K562 (cell line): ENCODE measurements at regions of chr1 and their contacts with region 1.

Region 1: GRCh38 chr1:54663725-54664124 is 22.1 kb downstream of the MROH7 start:
- DNase-seq: peak in 1 of 4 experiments; percentile 23
- ATAC-seq: peak; percentile 53
- H3K4me3 ChIP-seq: no peak overlapping the region
- H3K27ac ChIP-seq: no peak overlapping the region
- H3K4me1 ChIP-seq: no peaks in the 10 kb centered on the region
- H3K27me3 ChIP-seq: peaks cover 0 to 5% of the 10 kb centered on the region in 2 experiments; a peak in 3 of 5 replicates
- CTCF ChIP-seq: peak; percentile 28 to 70 (median 44); a peak in 3 of 6 replicates
- EP300 ChIP-seq: no peak
- POLR2A ChIP-seq: no peak
- RAD21 ChIP-seq: peak; percentile 57 to 81

Region 2: DNA sequence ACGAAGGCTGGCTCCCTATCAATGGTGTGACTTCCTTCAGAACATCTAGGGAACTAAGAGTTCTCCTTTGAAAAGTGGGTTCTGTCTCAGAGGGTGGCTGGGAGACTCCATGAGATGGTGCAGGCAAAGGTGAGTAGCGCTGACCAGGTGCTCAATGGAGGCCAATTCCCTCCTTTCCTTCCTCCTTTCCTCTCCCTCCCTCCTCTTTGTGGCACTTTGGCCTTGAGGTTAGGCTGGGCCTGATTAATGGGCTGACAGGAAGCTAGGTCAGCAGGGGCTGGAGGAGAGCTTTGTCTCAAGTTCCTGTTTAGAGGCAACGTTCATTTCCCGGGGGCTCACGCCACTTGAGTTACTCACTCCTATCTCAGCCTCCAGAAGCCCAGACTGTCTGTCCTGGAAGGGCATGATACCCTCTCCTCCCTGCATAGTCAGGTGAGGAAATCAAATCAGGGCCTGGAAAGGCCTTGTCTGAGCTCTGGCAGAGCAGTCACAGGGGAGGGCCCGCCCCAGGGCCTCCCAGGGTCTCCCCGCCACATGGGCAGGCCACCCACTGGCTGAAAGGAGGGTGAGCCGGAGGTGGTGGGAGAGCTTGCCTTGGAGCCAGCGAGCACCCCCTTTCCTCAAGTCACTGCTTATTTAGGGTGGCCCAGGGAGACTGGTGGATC is 199.1 kb before region 1 on chr1:
- CTCF ChIA-PET with region 1: no interaction called
- POLR2A ChIA-PET with region 1: no interaction called
- in situ Hi-C with region 1: no loop called
- intact Hi-C with region 1: no loop called
- DNase-seq: peak; percentile 88 to 98 (median 92)
- ATAC-seq: peak; percentile 92
- H3K4me3 ChIP-seq: no peak overlapping the region
- H3K27ac ChIP-seq: peak overlapping the region; percentile 67
- H3K4me1 ChIP-seq: peaks cover 37 to 41% of the 10 kb centered on the region in 2 experiments
- H3K27me3 ChIP-seq: no peaks in the 10 kb centered on the region
- CTCF ChIP-seq: no peak
- EP300 ChIP-seq: peak; percentile 95
- POLR2A ChIP-seq: no peak
- RAD21 ChIP-seq: peak; percentile 8 to 46; a peak in 2 of 4 replicates

Region 3: GRCh38 chr1:54510715-54511270 is 152.9 kb before region 1 on chr1:
- CTCF ChIA-PET with region 1: no interaction called
- POLR2A ChIA-PET with region 1: no interaction called
- in situ Hi-C with region 1: no loop called
- intact Hi-C with region 1: loop called (anchors 2 kb)
- DNase-seq: no peak
- ATAC-seq: 0 out of 3 replicates have a peak, but pooled peaks have one; percentile 14
- H3K4me3 ChIP-seq: no peak overlapping the region
- H3K27ac ChIP-seq: no peak overlapping the region
- H3K4me1 ChIP-seq: peaks cover 0 to 4% of the 10 kb centered on the region in 2 experiments; a peak in 2 of 5 replicates
- H3K27me3 ChIP-seq: peaks cover 10 to 48% of the 10 kb centered on the region in 2 experiments; a peak in 3 of 5 replicates
- CTCF ChIP-seq: peak in 2 of 3 experiments; percentile 27 to 30; a peak in 1 of 6 replicates
- EP300 ChIP-seq: no peak
- POLR2A ChIP-seq: no peak
- RAD21 ChIP-seq: peak in 1 of 2 experiments; percentile 48; a peak in 2 of 4 replicates